Spleen (tissue), 13 donors: ENCODE measurements at regions of chr9 and their contacts with region 1.

Region 1: DNA sequence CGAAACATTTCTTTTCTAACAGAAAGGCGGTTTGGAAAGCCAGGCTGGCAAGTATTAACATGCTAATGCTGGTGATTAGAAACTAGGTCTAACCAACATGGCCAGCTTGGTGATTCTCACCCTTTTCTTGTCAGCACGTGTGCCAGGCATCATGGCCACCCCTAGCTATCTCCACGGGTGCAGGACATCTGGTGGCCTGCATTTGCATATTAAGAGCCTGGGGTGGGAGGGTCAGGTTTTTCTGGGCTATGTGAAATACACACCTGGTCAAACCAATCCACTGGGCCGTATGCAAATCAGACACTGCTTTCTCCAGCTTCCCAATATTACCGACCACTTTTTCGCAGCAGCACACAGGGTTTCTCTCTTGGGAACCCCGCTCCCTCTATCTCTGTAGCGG is 612.1 kb downstream of the PTPRD start:
- DNase-seq: no peak
- H3K4me3 ChIP-seq: no peak overlapping the region
- H3K27ac ChIP-seq: no peak overlapping the region
- H3K4me1 ChIP-seq: peaks cover 0 to 10% (median 2%) of the 10 kb centered on the region in 6 donors
- H3K27me3 ChIP-seq: no peaks in the 10 kb centered on the region
- CTCF ChIP-seq: no peak
- POLR2A ChIP-seq: no peak

Region 2: GRCh38 chr9:9778293-9778692 is 222.4 kb before region 1 on chr9:
- intact Hi-C with region 1: no loop called
- DNase-seq: peak; percentile 61
- H3K4me3 ChIP-seq: no peak overlapping the region
- H3K27ac ChIP-seq: no peak overlapping the region
- H3K4me1 ChIP-seq: no peaks in the 10 kb centered on the region
- H3K27me3 ChIP-seq: no peaks in the 10 kb centered on the region
- CTCF ChIP-seq: no peak
- POLR2A ChIP-seq: no peak

Region 3: GRCh38 chr9:9938432-9938831 is 62.2 kb before region 1 on chr9:
- intact Hi-C with region 1: no loop called
- DNase-seq: no peak
- H3K4me3 ChIP-seq: no peak overlapping the region
- H3K27ac ChIP-seq: no peak overlapping the region
- H3K4me1 ChIP-seq: no peaks in the 10 kb centered on the region
- H3K27me3 ChIP-seq: no peaks in the 10 kb centered on the region
- CTCF ChIP-seq: no peak
- POLR2A ChIP-seq: no peak

Region 4: DNA sequence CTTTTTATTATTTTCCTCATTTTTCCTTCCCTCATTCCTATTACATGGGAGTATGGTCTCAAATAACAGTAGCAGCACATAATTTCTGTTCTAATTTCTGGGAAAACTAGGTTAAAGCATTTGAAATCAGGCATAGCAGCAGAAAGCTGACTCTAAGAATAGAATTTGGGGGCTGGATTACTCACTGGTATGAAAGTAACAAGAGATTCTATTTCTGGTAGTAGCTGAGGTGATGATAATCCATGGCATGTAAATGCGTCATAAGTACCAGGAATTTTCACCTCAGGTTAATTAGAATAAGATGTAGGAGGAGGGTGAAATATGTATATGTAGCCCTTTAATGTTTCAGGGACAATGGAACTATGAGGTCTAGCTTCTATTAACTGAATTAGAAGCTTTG is 49.9 kb before region 1 on chr9:
- intact Hi-C with region 1: no loop called
- DNase-seq: no peak
- H3K4me3 ChIP-seq: no peak overlapping the region
- H3K27ac ChIP-seq: no peak overlapping the region
- H3K4me1 ChIP-seq: no peaks in the 10 kb centered on the region
- H3K27me3 ChIP-seq: no peaks in the 10 kb centered on the region
- CTCF ChIP-seq: no peak
- POLR2A ChIP-seq: no peak

Region 5: DNA sequence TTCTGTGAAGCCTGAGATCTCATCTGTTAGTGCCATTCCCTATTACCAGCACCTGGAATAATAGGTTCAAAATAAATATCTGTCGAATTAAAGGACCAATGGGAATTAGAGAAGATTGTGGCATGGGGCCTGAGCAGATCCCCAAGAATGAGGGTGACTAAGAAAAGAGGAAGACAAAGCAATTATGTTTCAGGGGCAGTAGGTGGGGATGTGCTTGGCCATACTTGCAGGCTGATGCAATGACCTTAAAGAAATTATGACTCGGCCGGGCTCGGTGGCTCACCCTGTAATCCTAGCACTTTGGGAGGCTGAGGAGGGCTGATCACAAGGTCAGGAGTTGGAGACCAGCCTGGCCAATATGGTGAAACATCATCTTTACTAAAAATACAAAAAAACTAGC is 49.3 kb after region 1 on chr9:
- intact Hi-C with region 1: loop called (anchors 5 kb)
- DNase-seq: no peak
- H3K4me3 ChIP-seq: no peak overlapping the region
- H3K27ac ChIP-seq: no peak overlapping the region
- H3K4me1 ChIP-seq: no peaks in the 10 kb centered on the region
- H3K27me3 ChIP-seq: no peaks in the 10 kb centered on the region
- CTCF ChIP-seq: no peak
- POLR2A ChIP-seq: no peak

Region 6: DNA sequence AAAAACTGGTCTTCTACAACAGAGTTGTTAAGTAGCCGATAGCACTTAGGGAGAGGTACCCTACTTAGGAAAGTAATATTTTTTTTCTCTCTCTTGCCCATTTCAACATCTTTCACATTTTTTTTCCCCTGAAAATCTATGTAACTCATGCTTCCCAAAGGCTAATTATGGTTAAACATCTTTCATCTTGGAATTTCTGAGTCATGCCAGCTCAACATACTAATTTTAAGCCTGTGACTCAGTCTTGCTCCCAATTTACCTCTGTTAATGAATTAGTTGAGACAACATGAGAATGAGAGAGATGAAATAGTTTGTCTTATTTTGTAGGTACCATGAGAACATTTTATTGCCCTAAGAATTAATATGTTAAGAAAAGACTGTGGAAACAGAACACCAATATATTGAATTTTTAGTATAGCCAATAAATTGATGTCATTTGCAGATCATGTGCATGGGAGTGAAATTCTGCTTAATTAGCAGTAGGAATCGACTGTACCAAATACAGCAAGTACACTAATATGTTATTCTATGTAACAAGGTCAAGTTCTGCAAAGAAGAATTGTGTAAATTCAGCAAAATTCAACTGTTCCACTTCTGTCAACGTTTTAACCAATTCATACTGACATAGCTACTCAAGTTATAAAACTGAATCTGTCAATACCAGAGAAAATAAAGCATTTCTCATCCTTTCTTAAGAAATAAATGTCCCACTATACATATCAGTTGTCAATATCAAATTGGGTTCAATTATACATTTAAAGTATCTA is 62.1 kb after region 1 on chr9:
- intact Hi-C with region 1: no loop called
- DNase-seq: no peak
- H3K4me3 ChIP-seq: no peak overlapping the region
- H3K27ac ChIP-seq: no peak overlapping the region
- H3K4me1 ChIP-seq: no peaks in the 10 kb centered on the region
- H3K27me3 ChIP-seq: no peaks in the 10 kb centered on the region
- CTCF ChIP-seq: no peak
- POLR2A ChIP-seq: no peak